ENCODE measurements at regions of chr19 and their contacts with region 1.

Region 1: GRCh38 chr19:58519355-58520256 is at the start of gene ZBTB45:
- DNase-seq: peak; percentile 91
- H3K4me3 Mint-ChIP-seq: peak within 1 kb of the TSS; percentile 99
- H3K27ac Mint-ChIP-seq: peak within 1 kb of the TSS; percentile 99
- H3K4me1 Mint-ChIP-seq: peaks cover 34% of the 10 kb centered on the region
- H3K27me3 Mint-ChIP-seq: peaks cover 3% of the 10 kb centered on the region
- total RNA-seq, gene ZBTB45: 15.9 and 17.4 TPM in 2 replicates

Region 2: GRCh38 chr19:58228585-58229254 is 290.9 kb before region 1 on chr19 and contains the start of gene ZNF544:
- intact Hi-C with region 1: loop called (anchors 1 kb)
- DNase-seq: peak; percentile 60
- H3K4me3 Mint-ChIP-seq: peak within 1 kb of the TSS; percentile 89
- H3K27ac Mint-ChIP-seq: peak within 1 kb of the TSS; percentile 96
- H3K4me1 Mint-ChIP-seq: peaks cover 32% of the 10 kb centered on the region
- H3K27me3 Mint-ChIP-seq: no peaks in the 10 kb centered on the region
- total RNA-seq, gene ZNF544: 51.8 and 56.1 TPM in 2 replicates

Region 3: GRCh38 chr19:58318911-58319640 is 200.5 kb before region 1 on chr19:
- intact Hi-C with region 1: no loop called
- DNase-seq: no peak
- H3K4me3 Mint-ChIP-seq: no peak overlapping the region
- H3K27ac Mint-ChIP-seq: no peak overlapping the region
- H3K4me1 Mint-ChIP-seq: no peaks in the 10 kb centered on the region
- H3K27me3 Mint-ChIP-seq: no peaks in the 10 kb centered on the region

Region 4: GRCh38 chr19:58466760-58467589 is 52.6 kb before region 1 on chr19 and contains the start of gene ZNF324:
- intact Hi-C with region 1: loop called (anchors 2 kb)
- DNase-seq: peak; percentile 96
- H3K4me3 Mint-ChIP-seq: peak within 1 kb of the TSS; percentile 88
- H3K27ac Mint-ChIP-seq: peak within 1 kb of the TSS; percentile 71
- H3K4me1 Mint-ChIP-seq: peaks cover 17% of the 10 kb centered on the region
- H3K27me3 Mint-ChIP-seq: no peaks in the 10 kb centered on the region
- total RNA-seq, gene ZNF324: 12.8 and 15.5 TPM in 2 replicates

Region 5: DNA sequence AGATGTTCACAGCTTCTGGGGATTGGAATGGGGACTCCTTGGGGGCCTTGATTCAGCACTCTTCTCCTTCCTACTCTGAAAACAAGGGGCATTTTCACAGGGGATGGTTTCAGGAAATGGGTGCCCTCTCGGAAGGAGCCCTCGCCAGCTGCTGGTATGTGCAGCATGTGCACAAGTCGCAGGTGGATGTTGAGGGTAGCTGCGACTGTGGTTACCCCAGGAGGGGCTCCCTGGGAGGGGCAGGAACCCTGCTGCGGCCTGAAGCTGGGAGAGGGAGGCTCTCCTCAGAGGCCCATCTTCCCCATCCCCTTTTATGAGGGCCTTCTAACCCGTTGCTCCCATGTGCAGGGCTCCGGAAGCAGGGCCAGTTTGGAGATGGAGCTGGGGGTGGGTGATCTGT is 37.2 kb before region 1 on chr19:
- intact Hi-C with region 1: no loop called
- DNase-seq: no peak
- H3K4me3 Mint-ChIP-seq: no peak overlapping the region
- H3K27ac Mint-ChIP-seq: no peak overlapping the region
- H3K4me1 Mint-ChIP-seq: peaks cover 6% of the 10 kb centered on the region
- H3K27me3 Mint-ChIP-seq: no peaks in the 10 kb centered on the region

Region 6: DNA sequence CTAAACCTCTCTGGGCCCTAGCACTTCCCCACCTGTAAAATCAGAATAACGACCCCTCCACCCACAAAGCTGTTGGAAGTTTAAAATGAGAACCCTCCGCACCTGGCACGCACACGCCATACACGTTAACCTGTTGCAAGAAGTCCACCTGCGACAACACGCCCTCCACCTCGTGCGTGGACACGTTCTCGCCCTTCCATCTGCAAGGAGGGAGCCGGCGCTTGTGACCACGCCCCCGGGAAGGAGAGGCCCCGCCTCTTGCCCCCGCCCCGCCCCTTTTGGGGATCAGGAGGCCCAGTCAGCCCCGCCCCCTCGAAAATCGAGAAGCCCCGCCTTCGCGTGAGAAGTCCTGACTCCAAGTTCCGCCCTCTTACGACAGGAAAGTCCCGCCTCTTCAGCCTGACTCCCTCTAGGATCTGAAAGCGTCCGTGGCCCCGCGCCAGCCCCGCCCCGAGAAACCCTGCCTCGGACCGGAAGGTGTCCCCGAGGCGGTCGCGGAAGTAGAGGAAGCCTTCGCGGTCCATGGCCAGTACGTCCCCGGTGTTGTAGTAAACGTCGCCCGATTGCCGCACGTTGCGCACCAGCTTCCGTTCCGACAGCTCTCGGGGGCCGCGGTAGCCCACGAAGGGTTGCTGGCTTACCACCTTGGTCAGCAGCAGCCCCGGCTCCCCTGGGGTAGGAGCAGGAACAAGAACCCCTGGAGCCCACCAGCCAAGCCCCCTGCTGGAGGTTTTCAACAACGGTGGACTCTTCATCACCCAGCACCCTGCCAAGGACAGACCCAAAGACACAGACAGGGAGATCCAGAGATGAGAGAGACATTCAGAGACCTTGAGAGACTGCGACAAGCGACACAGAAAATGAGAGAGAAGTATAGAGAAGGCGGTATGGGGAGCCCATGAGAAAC is 20.3 kb before region 1 on chr19:
- intact Hi-C with region 1: loop called (anchors 1 kb)
- DNase-seq: peak; percentile 96
- H3K4me3 Mint-ChIP-seq: peak overlapping the region; percentile 91
- H3K27ac Mint-ChIP-seq: peak overlapping the region; percentile 91
- H3K4me1 Mint-ChIP-seq: peaks cover 21% of the 10 kb centered on the region
- H3K27me3 Mint-ChIP-seq: peaks cover 7% of the 10 kb centered on the region

Region 7: GRCh38 chr19:58543826-58544590 is 24.4 kb after region 1 on chr19 and contains the start of gene TRIM28:
- intact Hi-C with region 1: loop called (anchors 1 kb)
- DNase-seq: peak; percentile 100
- H3K4me3 Mint-ChIP-seq: peak within 1 kb of the TSS; percentile 94
- H3K27ac Mint-ChIP-seq: peak within 1 kb of the TSS; percentile 96
- H3K4me1 Mint-ChIP-seq: peaks cover 23% of the 10 kb centered on the region
- H3K27me3 Mint-ChIP-seq: peaks cover 6% of the 10 kb centered on the region
- total RNA-seq, gene TRIM28: 664 and 687 TPM in 2 replicates

Region 8: GRCh38 chr19:58572818-58573657 is 53.4 kb after region 1 on chr19 and contains the start of gene MZF1:
- intact Hi-C with region 1: loop called (anchors 1 kb)
- DNase-seq: peak; percentile 100
- H3K4me3 Mint-ChIP-seq: peak within 1 kb of the TSS; percentile 95
- H3K27ac Mint-ChIP-seq: peak within 1 kb of the TSS; percentile 99
- H3K4me1 Mint-ChIP-seq: peaks cover 41% of the 10 kb centered on the region
- H3K27me3 Mint-ChIP-seq: no peaks in the 10 kb centered on the region
- total RNA-seq, gene MZF1: 19.6 and 21.6 TPM in 2 replicates

Measured in activated T-helper 1 cell treated with anti-CD3 and anti-CD28 coated beads, Interleukin-12 subunit alpha, Interleukin-12 subunit beta, Interleukin-2, Interleukin-4 antibody, amounts not matched to agents 30 ng/mL and 10 ng/mL and 1 ng/mL, durations not matched to agents 14 hours and 24 hours and 36 hours (primary cell).